Dendritic cell treated with granulocyte-macrophage colony-stimulating factor and Interleukin-4, amounts not matched to agents 40 ng/mL and 50 ng/mL, for 4 days (primary cell): ENCODE measurements at regions of chr2 and their contacts with region 1.

Region 1: GRCh38 chr2:62794791-62795190 is 89.3 kb downstream of the EHBP1 start:
- H3K4me3 Mint-ChIP-seq: no peak overlapping the region
- H3K27ac Mint-ChIP-seq: no peak overlapping the region
- H3K4me1 Mint-ChIP-seq: no peaks in the 10 kb centered on the region
- H3K27me3 Mint-ChIP-seq: no peaks in the 10 kb centered on the region

Region 2: GRCh38 chr2:63424329-63425078 is 629.7 kb after region 1 on chr2:
- intact Hi-C with region 1: loop called (anchors 10 kb)
- H3K4me3 Mint-ChIP-seq: no peak overlapping the region
- H3K27ac Mint-ChIP-seq: no peak overlapping the region
- H3K4me1 Mint-ChIP-seq: no peaks in the 10 kb centered on the region
- H3K27me3 Mint-ChIP-seq: no peaks in the 10 kb centered on the region